ENCODE measurements at regions of chr19 and their contacts with region 1.

Region 1: GRCh38 chr19:16628183-16628983 is at the start of gene MED26:
- DNase-seq: peak; percentile 96
- H3K4me3 ChIP-seq: peak within 1 kb of the TSS; percentile 99
- H3K27ac ChIP-seq: peak within 1 kb of the TSS; percentile 96
- H3K4me1 ChIP-seq: peaks cover 52% of the 10 kb centered on the region
- CTCF ChIP-seq: no peak
- total RNA-seq, gene MED26: 17.2 and 19.4 TPM in 2 replicates

Region 2: GRCh38 chr19:15318241-15318691 is 1310.1 kb before region 1 on chr19:
- CTCF ChIA-PET with region 1: no interaction called
- POLR2A ChIA-PET with region 1: no interaction called
- intact Hi-C with region 1: no loop called
- DNase-seq: no peak
- H3K4me3 ChIP-seq: no peak overlapping the region
- H3K27ac ChIP-seq: peak overlapping the region; percentile 9
- H3K4me1 ChIP-seq: peaks cover 61% of the 10 kb centered on the region
- CTCF ChIP-seq: no peak

Region 3: DNA sequence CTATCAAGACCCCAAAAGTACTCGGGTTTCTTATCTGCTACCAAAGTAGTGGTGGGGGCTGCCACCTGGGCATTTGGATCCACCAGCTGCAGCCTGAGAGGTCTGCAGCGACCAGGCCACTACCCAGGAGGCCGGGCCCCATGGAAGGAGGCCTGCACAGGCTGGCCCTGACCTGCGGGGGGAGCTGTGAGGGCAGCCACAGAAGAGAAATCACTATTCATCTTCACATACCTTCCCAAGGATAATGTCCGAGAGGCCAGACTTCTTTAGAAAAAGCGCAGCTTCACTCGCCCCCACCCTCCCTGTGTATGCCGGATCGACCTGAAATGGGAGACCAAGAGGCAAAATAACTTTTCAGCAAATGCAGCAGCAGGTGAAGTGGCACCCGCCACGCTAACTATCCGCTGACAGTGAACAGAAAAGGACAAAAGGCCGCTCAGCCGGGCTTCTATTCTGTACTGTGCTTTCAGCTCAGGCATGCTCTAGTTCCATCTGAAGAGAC is 186.7 kb before region 1 on chr19:
- CTCF ChIA-PET with region 1: no interaction called
- POLR2A ChIA-PET with region 1: no interaction called
- intact Hi-C with region 1: loop called (anchors 2 kb)
- DNase-seq: peak; percentile 71
- H3K4me3 ChIP-seq: peak overlapping the region; percentile 1
- H3K27ac ChIP-seq: peak overlapping the region; percentile 96
- H3K4me1 ChIP-seq: peaks cover 87% of the 10 kb centered on the region
- CTCF ChIP-seq: peak; percentile 83

Region 4: DNA sequence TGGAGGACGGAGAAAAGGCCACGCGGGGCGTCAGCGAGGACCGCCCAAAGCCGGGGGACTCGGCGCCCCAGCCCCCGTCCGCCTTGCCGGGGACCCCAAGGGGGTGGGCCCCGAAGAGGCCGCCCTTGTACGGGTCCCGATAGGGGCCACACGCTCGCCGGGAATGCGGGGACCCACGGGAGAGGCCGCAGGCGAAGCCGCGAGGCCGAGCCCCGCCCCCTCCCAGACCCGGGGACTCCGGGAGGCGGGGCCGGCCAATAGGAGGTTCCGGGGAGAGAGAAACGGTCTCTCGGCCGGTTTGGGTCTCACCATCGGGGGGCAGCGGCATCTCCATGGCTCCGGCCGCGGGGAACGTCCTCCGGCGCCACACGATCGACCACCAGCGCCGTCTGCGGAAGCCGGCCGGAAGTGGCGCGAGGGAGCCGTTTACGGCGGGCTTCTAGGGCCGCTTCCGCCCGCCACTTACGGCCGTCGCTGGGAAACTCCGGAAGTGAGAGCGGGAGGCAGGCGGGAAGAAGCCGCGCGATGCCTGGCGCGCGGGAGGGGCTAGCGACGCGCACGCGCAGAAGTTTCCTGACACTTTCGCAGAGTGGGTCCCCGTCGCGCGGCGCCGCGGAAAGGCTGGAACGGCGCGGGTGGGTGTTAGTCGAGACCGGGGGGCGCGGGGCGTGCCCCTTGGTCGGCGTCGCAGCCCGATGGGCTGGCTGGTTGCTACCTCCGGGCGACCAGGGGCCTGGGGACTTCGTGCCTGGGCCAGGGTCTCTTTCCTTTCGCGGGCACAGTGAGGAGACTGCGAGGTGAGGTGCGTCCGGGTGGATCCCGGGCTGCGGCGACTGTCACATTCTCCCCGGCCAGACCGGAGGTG is 86.1 kb before region 1 on chr19 and contains the start of gene CHERP:
- CTCF ChIA-PET with region 1: no interaction called
- POLR2A ChIA-PET with region 1: interaction called, 3 read pairs
- intact Hi-C with region 1: loop called (anchors 2 kb)
- DNase-seq: peak; percentile 98
- H3K4me3 ChIP-seq: peak within 1 kb of the TSS; percentile 96
- H3K27ac ChIP-seq: peak within 1 kb of the TSS; percentile 71
- H3K4me1 ChIP-seq: peaks cover 33% of the 10 kb centered on the region
- CTCF ChIP-seq: 0 out of 2 replicates have a peak, but pooled peaks have one; percentile 21
- total RNA-seq, gene CHERP: 14.6 and 15.6 TPM in 2 replicates

Region 5: GRCh38 chr19:16572332-16573211 is 55.8 kb before region 1 on chr19 and contains the start of gene SLC35E1:
- CTCF ChIA-PET with region 1: no interaction called
- POLR2A ChIA-PET with region 1: no interaction called
- intact Hi-C with region 1: loop called (anchors 2 kb)
- DNase-seq: peak; percentile 95
- H3K4me3 ChIP-seq: peak within 1 kb of the TSS; percentile 83
- H3K27ac ChIP-seq: peak within 1 kb of the TSS; percentile 26
- H3K4me1 ChIP-seq: peaks cover 26% of the 10 kb centered on the region
- CTCF ChIP-seq: no peak
- total RNA-seq, gene SLC35E1: 17.3 and 21.1 TPM in 2 replicates

Region 6: GRCh38 chr19:16640951-16641350 is 12.6 kb after region 1 on chr19:
- CTCF ChIA-PET with region 1: no interaction called
- POLR2A ChIA-PET with region 1: no interaction called
- intact Hi-C with region 1: no loop called
- DNase-seq: no peak
- H3K4me3 ChIP-seq: no peak overlapping the region
- H3K27ac ChIP-seq: no peak overlapping the region
- H3K4me1 ChIP-seq: peaks cover 8% of the 10 kb centered on the region
- CTCF ChIP-seq: no peak

Region 7: GRCh38 chr19:16659831-16660708 is 31.7 kb after region 1 on chr19 and contains the start of gene SMIM7:
- CTCF ChIA-PET with region 1: interaction called, 3 read pairs
- POLR2A ChIA-PET with region 1: no interaction called
- intact Hi-C with region 1: loop called (anchors 1 kb)
- DNase-seq: peak; percentile 100
- H3K4me3 ChIP-seq: peak within 1 kb of the TSS; percentile 96
- H3K27ac ChIP-seq: peak within 1 kb of the TSS; percentile 83
- H3K4me1 ChIP-seq: peaks cover 29% of the 10 kb centered on the region
- CTCF ChIP-seq: peak; percentile 66
- total RNA-seq, gene SMIM7: 75.5 and 87.0 TPM in 2 replicates